ENCODE measurements at regions of chr11 and their contacts with region 1.

Region 1: GRCh38 chr11:66022401-66023185 is 3.7 kb downstream of the CATSPER1 start:
- DNase-seq: no peak
- H3K4me3 ChIP-seq: no peak overlapping the region
- H3K27ac ChIP-seq: no peak overlapping the region
- H3K27me3 ChIP-seq: no peaks in the 10 kb centered on the region
- CTCF ChIP-seq: peak; percentile 92

Region 2: GRCh38 chr11:66011239-66011784 is 11.3 kb before region 1 on chr11:
- CTCF ChIA-PET with region 1: interaction called, 16 read pairs
- POLR2A ChIA-PET with region 1: no interaction called
- DNase-seq: no peak
- H3K4me3 ChIP-seq: no peak overlapping the region
- H3K27ac ChIP-seq: no peak overlapping the region
- H3K27me3 ChIP-seq: peaks cover 3% of the 10 kb centered on the region
- CTCF ChIP-seq: no peak

Region 3: DNA sequence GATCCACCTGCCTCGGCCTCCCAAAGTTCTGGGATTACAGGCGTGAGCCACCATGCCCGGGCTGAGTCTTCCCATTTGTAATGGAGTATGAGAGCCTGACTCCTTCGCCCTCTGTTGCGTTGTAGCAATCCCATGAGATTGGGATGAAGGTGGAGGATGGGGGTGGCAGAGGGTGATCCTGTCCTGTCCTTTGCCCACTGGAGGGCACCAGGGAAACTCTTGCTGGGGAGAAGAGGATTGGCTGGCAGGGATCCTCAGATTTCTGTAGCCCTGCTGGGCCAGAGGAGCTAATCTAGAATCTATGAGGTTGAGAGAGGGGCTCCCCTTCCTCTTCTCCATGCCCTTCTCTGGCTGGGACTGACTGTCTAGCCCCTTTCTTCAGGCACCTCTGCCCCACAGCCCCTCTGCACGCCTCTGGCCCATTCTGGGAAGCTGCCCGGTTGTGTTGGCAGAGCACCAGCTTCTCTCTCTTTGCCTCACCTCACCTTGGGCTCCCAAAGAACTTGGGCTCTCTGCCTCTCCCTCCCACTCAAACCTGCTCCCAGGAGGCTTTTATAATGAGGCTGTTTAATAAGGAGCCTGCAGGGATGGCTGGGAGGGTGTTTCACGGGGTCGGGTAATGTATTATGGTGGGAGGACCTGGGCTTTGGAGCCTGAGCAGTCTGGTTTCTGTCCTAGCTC is 13.2 kb after region 1 on chr11:
- CTCF ChIA-PET with region 1: interaction called, 23 read pairs
- POLR2A ChIA-PET with region 1: no interaction called
- DNase-seq: no peak
- H3K4me3 ChIP-seq: no peak overlapping the region
- H3K27ac ChIP-seq: no peak overlapping the region
- H3K27me3 ChIP-seq: peaks cover 14% of the 10 kb centered on the region
- CTCF ChIP-seq: no peak

Region 4: DNA sequence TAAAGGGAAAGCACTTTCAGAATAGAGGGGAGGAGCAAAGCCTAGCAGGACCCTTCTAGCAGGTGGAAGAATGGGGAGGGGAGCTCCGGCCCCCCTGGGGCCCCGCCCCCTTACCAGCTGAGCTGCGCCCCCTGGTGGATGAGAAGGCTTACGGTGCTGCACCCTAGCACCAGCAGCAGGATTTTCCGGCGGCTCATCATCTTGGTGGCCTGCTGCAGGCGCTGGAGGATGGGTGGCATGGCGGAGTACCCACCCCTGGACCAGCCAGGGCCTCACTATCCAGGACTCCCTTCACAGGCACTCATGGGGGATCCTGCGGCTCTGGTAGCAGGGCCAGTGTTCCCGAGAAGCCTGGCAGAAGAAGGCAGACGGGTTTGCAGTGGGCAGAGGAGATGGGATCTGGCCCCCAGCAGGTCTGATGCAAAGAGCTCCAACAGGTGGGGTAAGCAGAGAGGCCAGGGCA is 22.6 kb after region 1 on chr11:
- CTCF ChIA-PET with region 1: interaction called, 48 read pairs
- POLR2A ChIA-PET with region 1: no interaction called
- DNase-seq: no peak
- H3K4me3 ChIP-seq: no peak overlapping the region
- H3K27ac ChIP-seq: no peak overlapping the region
- H3K27me3 ChIP-seq: peaks cover 9% of the 10 kb centered on the region
- CTCF ChIP-seq: peak; percentile 91

Region 5: DNA sequence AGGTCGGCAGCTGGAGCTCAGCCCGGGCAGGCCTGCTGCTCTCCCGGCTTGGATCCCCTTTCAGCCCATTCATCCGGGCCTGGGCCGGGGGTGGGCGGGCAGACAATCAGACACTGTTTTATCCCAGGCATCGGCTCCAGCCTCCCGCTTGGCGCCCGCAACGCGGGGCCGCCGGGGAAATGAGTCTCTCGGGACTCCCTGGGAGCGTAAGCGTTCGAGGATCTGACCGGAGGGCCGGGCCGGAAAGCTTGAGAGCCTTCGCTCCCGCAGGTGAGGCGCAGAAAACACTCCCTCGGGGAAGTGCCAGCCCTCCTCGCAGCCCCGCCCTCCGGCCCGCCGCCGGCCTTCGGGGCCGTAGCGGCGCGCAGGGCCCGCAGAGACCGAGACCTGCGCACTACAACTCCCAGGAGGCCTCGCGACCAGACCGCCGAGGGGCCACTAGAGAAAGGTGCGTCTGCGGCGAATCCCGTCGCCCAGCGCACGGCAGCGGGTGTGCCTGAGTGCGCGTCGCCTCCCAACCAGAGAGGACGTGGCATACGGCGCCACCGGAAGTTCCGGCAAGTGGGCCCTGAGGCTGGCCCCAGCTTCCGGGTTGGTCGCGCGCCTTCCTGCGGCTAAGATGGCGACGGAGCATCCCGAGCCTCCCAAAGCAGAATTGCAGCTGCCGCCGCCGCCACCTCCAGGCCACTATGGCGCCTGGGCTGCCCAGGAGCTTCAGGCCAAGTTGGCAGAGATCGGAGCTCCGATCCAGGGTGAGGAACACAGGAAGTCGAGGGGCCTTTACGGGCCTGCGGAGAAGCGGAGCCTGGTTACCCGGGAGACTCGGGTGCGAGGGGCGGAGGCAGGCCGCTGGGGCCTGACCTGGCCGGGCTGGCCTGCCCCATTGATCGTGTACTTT is 29.4 kb after region 1 on chr11 and contains the start of gene SF3B2:
- CTCF ChIA-PET with region 1: interaction called, 48 read pairs
- POLR2A ChIA-PET with region 1: interaction called, 3 read pairs
- DNase-seq: peak; percentile 96
- H3K4me3 ChIP-seq: peak within 1 kb of the TSS; percentile 87
- H3K27ac ChIP-seq: peak within 1 kb of the TSS; percentile 83
- H3K27me3 ChIP-seq: peaks cover 4% of the 10 kb centered on the region
- CTCF ChIP-seq: no peak
- polyA plus RNA-seq, gene SF3B2: 88.2 and 97.1 TPM in 2 replicates

Region 6: GRCh38 chr11:66136752-66137123 is 114.1 kb after region 1 on chr11:
- CTCF ChIA-PET with region 1: interaction called, 17 read pairs
- POLR2A ChIA-PET with region 1: no interaction called
- DNase-seq: no peak
- H3K4me3 ChIP-seq: no peak overlapping the region
- H3K27ac ChIP-seq: peak overlapping the region; percentile 73
- H3K27me3 ChIP-seq: no peaks in the 10 kb centered on the region
- CTCF ChIP-seq: no peak